ENCODE measurements at regions of chr6 and their contacts with region 1.

Region 1: GRCh38 chr6:35797837-35798526 is 859 bp upstream of the CLPS start:
- DNase-seq: peak in 3 of 4 experiments; percentile 13 to 24 (median 16)
- ATAC-seq: no peak
- H3K4me3 ChIP-seq: no peak overlapping the region
- H3K27ac ChIP-seq: no peak overlapping the region
- H3K4me1 ChIP-seq: no peaks in the 10 kb centered on the region
- H3K27me3 ChIP-seq: peaks cover 14 to 69% of the 10 kb centered on the region in 2 experiments; a peak in 4 of 5 replicates
- CTCF ChIP-seq: no peak
- EP300 ChIP-seq: no peak
- POLR2A ChIP-seq: no peak
- RAD21 ChIP-seq: no peak

Region 2: DNA sequence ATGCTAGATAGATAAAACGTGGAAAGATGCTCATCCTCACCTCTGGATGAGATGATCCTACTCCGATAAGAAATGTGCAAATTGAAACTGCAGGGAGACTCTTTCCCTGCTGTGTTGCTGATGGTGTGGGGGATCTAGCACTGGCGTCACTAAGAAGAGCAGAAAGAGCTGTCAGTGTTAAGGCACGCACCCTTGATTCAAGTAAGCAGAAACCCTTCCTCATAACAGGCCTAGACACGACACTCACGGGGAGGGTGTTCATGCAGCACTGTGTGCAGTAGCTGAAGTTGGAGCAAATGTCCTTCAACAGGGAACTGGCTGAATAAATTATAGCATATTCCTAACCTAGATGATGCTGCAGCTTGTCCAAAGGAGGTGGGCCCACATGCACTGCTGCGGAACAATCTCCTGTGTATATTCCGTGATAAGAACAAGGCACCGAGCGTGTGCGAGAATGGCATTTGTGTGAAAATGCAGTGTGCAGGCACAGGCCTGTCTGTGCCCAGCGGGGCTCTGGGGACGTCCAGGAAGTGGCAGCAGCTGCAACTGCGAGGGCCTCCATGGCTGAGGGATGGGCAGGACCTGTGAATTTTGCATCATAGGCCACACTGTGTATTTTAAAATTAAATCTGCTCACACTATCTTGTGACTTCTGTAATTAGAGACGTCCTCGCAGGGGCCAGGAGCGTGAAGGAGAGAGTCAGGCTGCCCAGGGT is 720.8 kb before region 1 on chr6:
- CTCF ChIA-PET with region 1: no interaction called
- POLR2A ChIA-PET with region 1: no interaction called
- in situ Hi-C with region 1: no loop called
- intact Hi-C with region 1: no loop called
- DNase-seq: no peak
- ATAC-seq: no peak
- H3K4me3 ChIP-seq: no peak overlapping the region
- H3K27ac ChIP-seq: no peak overlapping the region
- H3K4me1 ChIP-seq: peaks cover 0 to 15% of the 10 kb centered on the region in 2 experiments; a peak in 1 of 5 replicates
- H3K27me3 ChIP-seq: no peaks in the 10 kb centered on the region
- CTCF ChIP-seq: no peak
- EP300 ChIP-seq: no peak
- POLR2A ChIP-seq: no peak
- RAD21 ChIP-seq: no peak

Region 3: GRCh38 chr6:35786810-35787209 is 11.2 kb before region 1 on chr6:
- CTCF ChIA-PET with region 1: no interaction called
- POLR2A ChIA-PET with region 1: interaction called, 48 read pairs
- in situ Hi-C with region 1: no loop called
- intact Hi-C with region 1: loop called (anchors 1 kb)
- DNase-seq: peak in 2 of 4 experiments; percentile 48 to 51
- ATAC-seq: peak; percentile 60
- H3K4me3 ChIP-seq: no peak overlapping the region
- H3K27ac ChIP-seq: no peak overlapping the region
- H3K4me1 ChIP-seq: peaks cover 0 to 6% of the 10 kb centered on the region in 2 experiments; a peak in 3 of 5 replicates
- H3K27me3 ChIP-seq: peaks cover 52 to 55% of the 10 kb centered on the region in 2 experiments
- CTCF ChIP-seq: no peak
- EP300 ChIP-seq: no peak
- POLR2A ChIP-seq: no peak
- RAD21 ChIP-seq: no peak